ENCODE measurements at regions of chr2 and their contacts with region 1.

Region 1: GRCh38 chr2:37274359-37274965 is 43.0 kb downstream of the NDUFAF7 start:
- DNase-seq: no peak
- ATAC-seq: no peak
- H3K4me3 ChIP-seq: no peak overlapping the region
- H3K27ac ChIP-seq: no peak overlapping the region
- H3K4me1 ChIP-seq: no peaks in the 10 kb centered on the region
- H3K27me3 ChIP-seq: no peaks in the 10 kb centered on the region
- CTCF ChIP-seq: no peak

Region 2: DNA sequence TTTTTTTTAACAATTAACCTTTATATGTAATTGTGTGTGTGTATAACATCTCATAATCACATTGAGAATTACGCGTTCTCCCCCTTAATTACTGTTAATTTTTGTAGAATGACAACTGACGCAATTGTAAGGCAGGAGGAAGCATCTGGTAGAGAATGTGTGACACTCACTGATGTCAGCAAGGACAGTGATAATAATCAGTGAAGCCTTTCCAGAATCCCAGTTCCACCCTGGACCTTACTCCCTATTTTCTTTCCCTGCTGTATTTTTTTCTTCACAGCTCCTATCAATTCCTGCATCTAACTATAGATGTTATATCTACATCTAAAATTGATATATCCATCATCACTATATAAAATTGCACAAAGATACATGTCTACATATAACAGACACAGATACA is 292.0 kb before region 1 on chr2:
- CTCF ChIA-PET with region 1: no interaction called
- POLR2A ChIA-PET with region 1: no interaction called
- in situ Hi-C with region 1: no loop called
- intact Hi-C with region 1: no loop called
- DNase-seq: no peak
- ATAC-seq: no peak
- H3K4me3 ChIP-seq: no peak overlapping the region
- H3K27ac ChIP-seq: no peak overlapping the region
- H3K4me1 ChIP-seq: no peaks in the 10 kb centered on the region
- H3K27me3 ChIP-seq: no peaks in the 10 kb centered on the region
- CTCF ChIP-seq: no peak

Region 3: GRCh38 chr2:37244017-37244416 is 30.4 kb before region 1 on chr2:
- CTCF ChIA-PET with region 1: interaction called, 12 read pairs
- POLR2A ChIA-PET with region 1: no interaction called
- in situ Hi-C with region 1: no loop called
- intact Hi-C with region 1: no loop called
- DNase-seq: no peak
- ATAC-seq: no peak
- H3K4me3 ChIP-seq: no peak overlapping the region
- H3K27ac ChIP-seq: no peak overlapping the region
- H3K4me1 ChIP-seq: no peaks in the 10 kb centered on the region
- H3K27me3 ChIP-seq: no peaks in the 10 kb centered on the region
- CTCF ChIP-seq: no peak

Region 4: DNA sequence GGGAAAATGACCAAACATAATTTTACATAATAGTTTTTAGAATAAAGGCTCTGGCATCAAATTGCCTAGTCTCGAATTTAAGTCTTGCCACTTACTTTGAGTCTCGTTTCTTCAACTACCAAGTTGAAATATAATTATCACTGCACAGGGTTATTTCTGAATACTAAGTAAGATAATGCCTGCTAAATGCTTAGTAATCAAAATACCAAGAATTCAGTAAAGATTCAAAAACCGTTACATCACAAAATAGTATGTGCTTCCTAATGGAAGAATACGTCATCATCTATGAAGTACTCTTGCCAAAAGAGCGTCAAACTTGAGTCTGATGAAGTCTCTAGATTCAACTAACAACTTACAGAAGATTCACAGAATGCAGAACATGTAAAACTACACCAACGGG is 1062.2 kb after region 1 on chr2:
- CTCF ChIA-PET with region 1: no interaction called
- POLR2A ChIA-PET with region 1: no interaction called
- in situ Hi-C with region 1: no loop called
- intact Hi-C with region 1: no loop called
- DNase-seq: no peak
- ATAC-seq: no peak
- H3K4me3 ChIP-seq: no peak overlapping the region
- H3K27ac ChIP-seq: no peak overlapping the region
- H3K4me1 ChIP-seq: no peaks in the 10 kb centered on the region
- H3K27me3 ChIP-seq: no peaks in the 10 kb centered on the region
- CTCF ChIP-seq: no peak

Measured in Panc1 (cell line).